Astrocyte of the cerebellum (primary cell): ENCODE measurements at regions of chr6 and their contacts with region 1.

Region 1: DNA sequence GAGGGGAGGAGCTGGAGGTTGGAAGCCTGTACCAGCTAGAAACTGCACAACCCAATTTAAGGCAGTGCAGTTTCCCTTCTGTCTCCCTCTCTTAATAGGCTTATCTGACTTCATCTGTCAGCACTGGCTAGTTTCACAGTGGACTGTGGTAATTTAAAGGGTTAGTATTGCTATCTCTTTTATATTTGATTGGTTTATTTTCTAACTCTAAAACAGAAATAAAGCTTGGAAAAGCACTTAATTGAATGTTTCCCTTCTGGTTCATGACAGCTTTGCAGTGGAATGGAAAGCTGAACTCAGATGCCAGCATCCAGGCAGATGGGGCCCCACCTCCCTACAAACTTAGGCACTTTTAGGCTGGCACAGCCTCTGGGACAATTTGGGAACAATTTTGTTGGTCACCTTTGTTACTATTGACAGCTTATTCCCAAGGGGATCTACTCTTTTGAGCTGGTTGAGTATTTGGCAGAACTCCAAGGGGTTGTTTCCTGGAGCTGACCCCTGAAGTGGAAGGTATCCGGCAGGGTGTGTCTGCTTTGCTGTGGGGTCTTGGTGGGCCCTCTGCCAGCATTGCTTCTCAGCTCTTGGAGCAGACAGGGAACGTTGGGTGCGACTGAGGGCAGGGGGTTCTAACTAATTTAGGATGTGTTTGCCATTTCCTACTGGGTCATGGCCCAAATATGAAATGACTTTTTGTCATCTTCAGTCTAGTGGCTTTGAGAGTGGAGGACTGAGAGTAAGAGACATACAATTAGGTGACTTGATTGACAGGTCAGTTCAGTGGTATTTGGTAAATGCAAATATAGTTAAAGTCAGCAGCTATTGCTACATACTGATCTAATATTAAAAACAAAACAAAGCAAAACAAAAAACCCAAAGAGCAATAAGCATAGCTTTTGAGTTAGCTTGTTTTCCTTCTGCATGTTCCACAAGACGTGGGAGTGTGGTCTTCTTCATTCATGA is 9.3 kb downstream of the SH3BGRL2 start:
- DNase-seq: no peak
- H3K4me3 ChIP-seq: no peak overlapping the region
- CTCF ChIP-seq: no peak

Region 2: DNA sequence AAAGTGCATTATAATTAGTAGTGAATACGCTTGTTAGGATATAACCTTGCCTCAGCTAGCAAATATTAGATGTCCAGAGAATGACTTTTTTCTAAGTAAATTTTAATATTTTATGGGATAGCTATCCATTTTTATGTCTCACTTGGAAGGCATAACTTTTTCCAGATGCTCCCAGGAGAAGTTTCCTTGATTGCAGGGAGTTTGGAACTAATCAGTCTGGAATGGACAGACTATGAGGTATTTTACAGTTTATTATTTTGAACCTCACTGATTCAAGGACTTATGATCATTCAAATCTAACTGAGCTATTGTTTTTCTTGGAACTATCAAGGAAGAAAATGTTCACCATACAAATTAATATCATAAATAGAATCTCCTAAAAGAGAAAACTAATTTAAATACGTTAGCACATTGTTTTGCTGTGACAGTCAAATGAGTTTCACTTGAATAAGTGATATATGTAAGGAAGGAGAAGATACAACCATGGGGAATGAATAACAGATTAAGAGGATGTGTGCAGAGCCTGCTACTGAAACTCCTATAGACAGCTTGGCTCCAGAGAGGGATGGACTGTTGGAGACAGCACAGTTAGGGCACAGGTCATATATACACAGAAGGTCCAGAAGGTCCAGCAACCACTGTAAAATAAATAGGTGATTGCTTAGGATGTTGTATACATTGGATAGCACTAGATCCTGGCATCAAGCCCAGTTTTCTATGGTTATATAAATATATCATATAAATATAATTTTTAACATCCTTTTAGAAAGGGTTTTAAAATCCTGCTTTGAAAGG is 82.6 kb before region 1 on chr6:
- in situ Hi-C with region 1: no loop called
- DNase-seq: no peak
- H3K4me3 ChIP-seq: no peak overlapping the region
- CTCF ChIP-seq: no peak

Region 3: GRCh38 chr6:79586548-79586947 is 53.9 kb before region 1 on chr6:
- in situ Hi-C with region 1: no loop called
- DNase-seq: no peak
- H3K4me3 ChIP-seq: no peak overlapping the region
- CTCF ChIP-seq: peak; percentile 72

Region 4: GRCh38 chr6:79600812-79601609 is 39.4 kb before region 1 on chr6:
- in situ Hi-C with region 1: loop called (anchors 5 kb)
- DNase-seq: peak; percentile 28
- H3K4me3 ChIP-seq: no peak overlapping the region
- CTCF ChIP-seq: no peak

Region 5: GRCh38 chr6:79702691-79703090 is 62.3 kb after region 1 on chr6:
- in situ Hi-C with region 1: no loop called
- DNase-seq: no peak
- H3K4me3 ChIP-seq: no peak overlapping the region
- CTCF ChIP-seq: no peak

Region 6: GRCh38 chr6:79713701-79714322 is 73.4 kb after region 1 on chr6:
- in situ Hi-C with region 1: no loop called
- DNase-seq: no peak
- H3K4me3 ChIP-seq: no peak overlapping the region
- CTCF ChIP-seq: peak; percentile 79